Activated CD8-positive, alpha-beta T cell treated with anti-CD3 and anti-CD28 coated beads, Interleukin-2, amount 10 ng/mL, durations not matched to agents 7 days and 5 days (primary cell): ENCODE measurements at regions of chr7 and their contacts with region 1.

Region 1: DNA sequence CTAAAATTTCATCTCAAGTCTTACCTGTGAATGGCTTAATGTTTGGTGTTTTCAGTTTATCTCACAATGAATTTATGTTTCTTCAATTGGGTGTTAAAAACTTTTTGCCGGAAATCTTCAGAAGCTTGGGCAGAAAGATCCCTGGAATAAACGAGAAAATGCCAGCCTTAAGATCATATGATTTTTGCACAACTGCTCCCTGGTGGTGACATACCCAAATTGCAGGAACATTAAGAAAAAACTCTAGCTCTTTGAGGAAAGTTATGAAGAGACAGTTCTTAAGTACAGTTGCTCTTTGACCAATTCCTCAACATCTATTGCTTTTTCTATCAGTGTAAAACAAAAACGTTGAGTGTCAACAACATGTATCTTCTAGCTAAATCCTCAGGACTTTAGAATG is 48.2 kb upstream of the CREB5 start:
- DNase-seq: no peak
- ATAC-seq: no peak
- H3K4me3 Mint-ChIP-seq: no peak overlapping the region
- H3K27ac Mint-ChIP-seq: no peak overlapping the region
- H3K4me1 Mint-ChIP-seq: no peaks in the 10 kb centered on the region
- H3K27me3 Mint-ChIP-seq: peaks cover 4% of the 10 kb centered on the region

Region 2: DNA sequence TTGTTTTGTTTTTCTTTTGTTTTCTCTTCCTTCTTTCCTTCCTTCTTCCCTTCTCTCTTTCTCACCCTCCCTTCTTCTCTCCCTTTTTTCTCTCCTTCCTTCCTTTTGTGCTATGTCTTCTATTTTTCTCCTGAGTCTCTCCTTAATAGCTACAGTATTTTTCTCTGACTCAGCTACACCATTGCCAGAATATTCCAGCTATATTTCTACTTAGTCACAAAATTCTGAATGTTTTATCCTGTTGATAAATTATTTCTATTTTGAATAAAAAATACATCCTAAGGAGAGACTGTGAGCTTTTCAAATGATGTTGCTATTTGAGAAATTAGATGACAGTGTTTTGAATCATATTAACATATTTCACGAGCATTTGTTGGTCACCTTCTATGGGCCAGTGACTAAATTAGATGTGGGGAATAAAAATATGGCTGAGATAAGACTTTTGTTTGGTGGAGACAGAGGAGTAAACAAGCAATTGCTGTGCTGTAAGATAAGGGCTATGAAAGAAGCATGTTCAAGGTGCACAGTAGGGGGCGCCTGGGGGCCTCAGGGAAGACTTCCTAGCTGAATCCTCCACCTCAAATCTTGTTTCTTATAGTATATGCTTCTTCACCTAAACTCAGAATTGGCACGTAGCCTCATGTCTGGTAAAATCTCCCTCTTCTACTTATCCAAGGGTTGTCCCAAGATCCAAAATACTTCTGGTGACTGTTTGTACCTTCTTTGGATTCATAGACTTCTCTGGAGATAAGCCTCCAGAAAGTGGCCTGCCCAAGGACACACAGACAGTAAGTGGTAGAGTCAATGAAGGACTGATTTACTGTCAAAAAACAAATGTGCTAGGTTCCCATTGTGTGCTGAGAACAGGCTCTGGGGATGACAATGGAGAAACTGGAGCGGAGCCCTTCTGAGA is 67.3 kb before region 1 on chr7:
- CTCF ChIA-PET with region 1: interaction called, 10 read pairs
- POLR2A ChIA-PET with region 1: no interaction called
- DNase-seq: peak; percentile 61
- ATAC-seq: no peak
- H3K4me3 Mint-ChIP-seq: no peak overlapping the region
- H3K27ac Mint-ChIP-seq: no peak overlapping the region
- H3K4me1 Mint-ChIP-seq: no peaks in the 10 kb centered on the region
- H3K27me3 Mint-ChIP-seq: peaks cover 17% of the 10 kb centered on the region

Region 3: DNA sequence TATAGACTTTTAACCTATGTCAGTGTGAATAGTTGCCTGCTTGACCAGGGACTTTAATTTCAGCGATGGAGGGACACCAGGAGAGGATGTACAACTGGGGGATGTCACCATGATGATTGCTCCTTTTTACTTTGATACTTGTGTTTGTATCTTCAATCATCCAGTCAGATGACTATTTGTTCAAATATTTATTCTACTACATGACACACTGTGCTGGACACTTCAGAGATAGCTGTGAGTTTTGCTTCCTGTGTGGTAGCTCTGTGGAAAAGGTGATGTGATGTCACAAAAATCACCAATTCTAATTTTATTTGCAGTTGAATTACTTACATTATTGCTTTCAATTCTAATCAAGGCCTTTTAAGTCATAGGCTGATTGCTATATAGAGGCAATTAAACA is 14.4 kb before region 1 on chr7:
- CTCF ChIA-PET with region 1: interaction called, 10 read pairs
- POLR2A ChIA-PET with region 1: no interaction called
- DNase-seq: no peak
- ATAC-seq: no peak
- H3K4me3 Mint-ChIP-seq: no peak overlapping the region
- H3K27ac Mint-ChIP-seq: no peak overlapping the region
- H3K4me1 Mint-ChIP-seq: no peaks in the 10 kb centered on the region
- H3K27me3 Mint-ChIP-seq: peaks cover 3% of the 10 kb centered on the region